ENCODE measurements at regions of chr17 and their contacts with region 1.

Region 1: GRCh38 chr17:55421179-55421934 is at the start of gene MMD:
- DNase-seq: no peak
- H3K4me3 ChIP-seq: peak within 1 kb of the TSS; percentile 85 to 93 (median 91)
- H3K27ac ChIP-seq: peak within 1 kb of the TSS; percentile 92 to 98 (median 94)
- H3K4me1 ChIP-seq: peaks cover 26 to 54% (median 48%) of the 10 kb centered on the region in 4 donors
- H3K27me3 ChIP-seq: no peaks in the 10 kb centered on the region
- CTCF ChIP-seq: no peak
- EP300 ChIP-seq: no peak
- POLR2A ChIP-seq: no peak
- total RNA-seq, gene MMD: 28.5 to 43.9 (median 32.4) TPM

Region 2: GRCh38 chr17:55264645-55265298 is 156.6 kb before region 1 on chr17 and contains the start of gene HLF:
- intact Hi-C with region 1: loop called (anchors 10 kb)
- DNase-seq: peak; percentile 93
- H3K4me3 ChIP-seq: peak within 1 kb of the TSS; percentile 70 to 87 (median 76)
- H3K27ac ChIP-seq: peak within 1 kb of the TSS; percentile 92 to 99 (median 98)
- H3K4me1 ChIP-seq: peaks cover 13 to 38% (median 33%) of the 10 kb centered on the region in 4 donors
- H3K27me3 ChIP-seq: no peaks in the 10 kb centered on the region
- CTCF ChIP-seq: peak in 1 of 3 experiments; percentile 4
- EP300 ChIP-seq: no peak
- POLR2A ChIP-seq: no peak
- total RNA-seq, gene HLF: 137 to 176 (median 154) TPM

Region 3: GRCh38 chr17:55285340-55286301 is 135.7 kb before region 1 on chr17:
- intact Hi-C with region 1: no loop called
- DNase-seq: peak; percentile 98
- H3K4me3 ChIP-seq: peak overlapping the region; percentile 15 to 40 (median 20)
- H3K27ac ChIP-seq: peak overlapping the region; percentile 91 to 99 (median 95)
- H3K4me1 ChIP-seq: peaks cover 97 to 100% (median 98%) of the 10 kb centered on the region in 4 donors
- H3K27me3 ChIP-seq: no peaks in the 10 kb centered on the region
- CTCF ChIP-seq: no peak
- EP300 ChIP-seq: peak; percentile 78
- POLR2A ChIP-seq: no peak

Region 4: DNA sequence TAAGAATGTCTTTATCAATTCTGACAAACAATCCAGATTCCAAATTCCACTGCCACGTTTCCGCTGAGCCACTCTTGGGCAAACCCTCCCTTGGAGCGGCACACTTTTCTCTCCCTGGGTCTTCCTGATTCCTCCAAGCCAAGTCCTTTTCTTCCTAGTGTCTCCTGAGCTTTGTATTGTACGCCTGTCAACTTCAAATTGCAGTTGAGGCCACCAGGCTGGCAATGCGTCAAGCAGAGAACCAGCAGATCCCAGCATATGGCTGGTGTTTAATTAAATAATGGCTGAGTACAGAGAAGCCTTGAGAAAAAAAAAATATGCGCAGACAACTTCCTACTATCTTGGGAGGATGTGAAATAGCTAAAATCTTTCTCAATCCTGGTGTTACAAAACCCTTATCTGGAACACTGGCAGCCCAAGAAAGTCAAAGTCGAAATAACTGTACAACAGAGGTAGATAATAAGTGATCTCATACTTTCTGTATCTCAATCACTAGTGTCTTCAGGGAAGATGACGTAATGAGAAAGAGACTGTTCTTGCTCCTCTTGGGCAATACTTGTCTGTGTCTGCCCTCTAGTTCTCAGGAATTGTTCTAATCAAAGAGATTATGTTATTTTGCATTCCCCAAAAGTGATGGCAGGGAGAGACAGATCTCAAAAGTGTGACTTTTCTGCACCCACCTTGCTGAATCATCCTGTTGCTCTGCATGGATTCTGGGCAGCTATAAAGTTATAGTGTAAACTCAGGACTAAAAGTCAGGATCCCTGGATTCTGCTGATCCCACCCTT is 74.9 kb after region 1 on chr17:
- intact Hi-C with region 1: loop called (anchors 5 kb)
- DNase-seq: no peak
- H3K4me3 ChIP-seq: no peak overlapping the region
- H3K27ac ChIP-seq: peak overlapping the region in 3 of 4 donors; percentile 37 to 55 (median 44)
- H3K4me1 ChIP-seq: peaks cover 3 to 33% (median 18%) of the 10 kb centered on the region in 4 donors
- H3K27me3 ChIP-seq: no peaks in the 10 kb centered on the region
- CTCF ChIP-seq: no peak
- EP300 ChIP-seq: no peak
- POLR2A ChIP-seq: no peak

Region 5: DNA sequence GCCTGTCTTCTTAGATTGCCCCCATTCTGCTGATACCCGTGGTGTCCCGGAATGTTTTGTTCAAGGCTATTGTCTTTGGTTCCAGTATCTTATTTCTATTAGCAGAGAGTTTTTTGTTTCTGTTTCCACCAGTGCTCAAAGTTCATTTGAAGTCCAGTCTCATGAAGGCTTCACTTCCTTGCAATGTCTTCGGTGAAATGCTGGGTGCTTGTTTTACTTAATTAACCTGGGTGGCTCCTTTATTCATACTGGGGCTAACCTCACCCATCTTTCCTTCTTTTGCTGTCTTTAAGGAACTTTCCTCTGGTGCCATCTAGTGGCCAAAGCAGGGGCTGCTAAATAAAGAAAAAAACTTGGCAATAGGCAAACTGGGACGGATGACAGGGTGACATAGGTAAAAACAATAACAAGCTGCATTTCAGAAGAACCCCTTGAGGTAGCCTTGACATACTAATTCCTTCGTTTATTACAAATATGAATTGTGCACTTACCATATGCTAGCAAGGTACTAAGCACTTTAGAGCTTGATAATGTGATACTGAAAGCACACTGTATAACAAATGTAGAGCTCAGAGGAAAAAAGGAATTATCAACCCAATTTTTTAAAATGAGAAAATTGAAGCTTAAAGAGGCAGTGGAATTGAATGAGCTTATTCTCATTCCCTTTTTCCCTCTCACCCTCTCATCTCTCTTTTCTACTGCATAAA is 92.7 kb after region 1 on chr17:
- intact Hi-C with region 1: loop called (anchors 5 kb)
- DNase-seq: peak; percentile 94
- H3K4me3 ChIP-seq: no peak overlapping the region
- H3K27ac ChIP-seq: no peak overlapping the region
- H3K4me1 ChIP-seq: peaks cover 0 to 12% (median 11%) of the 10 kb centered on the region in 4 donors
- H3K27me3 ChIP-seq: no peaks in the 10 kb centered on the region
- CTCF ChIP-seq: peak; percentile 90 to 96 (median 92)
- EP300 ChIP-seq: no peak
- POLR2A ChIP-seq: no peak

Measured in esophagus muscularis mucosa (tissue), 4 donors.